Right ventricle myocardium superior (tissue), 1 donor: ENCODE measurements at regions of chr22 and their contacts with region 1.

Region 1: GRCh38 chr22:25461301-25461700 is 103.2 kb upstream of the GRK3 start:
- DNase-seq: no peak
- ATAC-seq: no peak

Region 2: DNA sequence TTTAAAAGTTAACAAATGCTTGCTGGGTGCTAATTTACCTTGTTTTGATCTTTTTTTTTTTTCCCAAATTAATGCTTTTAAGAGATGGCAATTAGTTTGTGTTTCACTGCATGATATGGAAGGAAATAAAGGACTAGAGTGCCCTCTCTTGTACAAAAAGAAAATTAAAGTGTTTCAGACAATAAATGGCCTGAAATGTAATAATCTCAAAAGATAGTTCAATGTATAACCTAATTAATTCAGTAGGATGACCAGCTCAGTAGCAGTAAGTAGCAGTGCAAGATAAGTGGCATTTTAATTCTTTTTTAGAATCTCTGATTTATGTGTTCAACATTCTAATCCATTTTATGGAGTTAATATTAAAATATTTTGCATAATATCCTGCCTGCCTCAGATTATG is 240.7 kb after region 1 on chr22:
- intact Hi-C with region 1: loop called (anchors 5 kb)
- DNase-seq: no peak
- ATAC-seq: peak; percentile 73

Region 3: GRCh38 chr22:25777870-25778269 is 316.6 kb after region 1 on chr22:
- intact Hi-C with region 1: loop called (anchors 5 kb)
- DNase-seq: no peak
- ATAC-seq: no peak